Naive thymus-derived CD4-positive, alpha-beta T cell (primary cell): ENCODE measurements at regions of chr2 and their contacts with region 1.

Region 1: GRCh38 chr2:11778923-11779757 is 32.7 kb downstream of the LPIN1 start:
- DNase-seq: peak; percentile 66 to 88 (median 83)
- ATAC-seq: peak; percentile 98
- H3K4me3 ChIP-seq: peak overlapping the region; percentile 32
- H3K4me3 Mint-ChIP-seq: peak overlapping the region; percentile 53 to 80 (median 71)
- H3K27ac ChIP-seq: no peak overlapping the region
- H3K27ac Mint-ChIP-seq: peak overlapping the region; percentile 0 to 88 (median 73)
- H3K4me1 ChIP-seq: peaks cover 13 to 15% of the 10 kb centered on the region in 2 donors
- H3K4me1 Mint-ChIP-seq: peaks cover 23 to 51% (median 41%) of the 10 kb centered on the region in 7 donors
- H3K27me3 ChIP-seq: no peaks in the 10 kb centered on the region
- H3K27me3 Mint-ChIP-seq: no peaks in the 10 kb centered on the region

Region 2: GRCh38 chr2:11477994-11478393 is 301.1 kb before region 1 on chr2:
- CTCF ChIA-PET with region 1: interaction called, 4 read pairs
- POLR2A ChIA-PET with region 1: no interaction called
- intact Hi-C with region 1: loop called (anchors 1 to 5 kb)
- DNase-seq: peak; percentile 44 to 79 (median 63)
- ATAC-seq: peak; percentile 77
- H3K4me3 ChIP-seq: no peak overlapping the region
- H3K4me3 Mint-ChIP-seq: no peak overlapping the region
- H3K27ac ChIP-seq: no peak overlapping the region
- H3K27ac Mint-ChIP-seq: no peak overlapping the region
- H3K4me1 ChIP-seq: no peaks in the 10 kb centered on the region
- H3K4me1 Mint-ChIP-seq: peaks cover 0 to 8% (median 6%) of the 10 kb centered on the region in 7 donors
- H3K27me3 ChIP-seq: no peaks in the 10 kb centered on the region
- H3K27me3 Mint-ChIP-seq: peaks cover 28 to 39% (median 32%) of the 10 kb centered on the region in 5 donors

Region 3: GRCh38 chr2:11589316-11589940 is 189.7 kb before region 1 on chr2:
- CTCF ChIA-PET with region 1: no interaction called
- POLR2A ChIA-PET with region 1: no interaction called
- intact Hi-C with region 1: loop called (anchors 2 to 10 kb)
- DNase-seq: no peak
- ATAC-seq: no peak
- H3K4me3 ChIP-seq: no peak overlapping the region
- H3K4me3 Mint-ChIP-seq: no peak overlapping the region
- H3K27ac ChIP-seq: no peak overlapping the region
- H3K27ac Mint-ChIP-seq: no peak overlapping the region
- H3K4me1 ChIP-seq: no peaks in the 10 kb centered on the region
- H3K4me1 Mint-ChIP-seq: peaks cover 0 to under 1% (median 0%) of the 10 kb centered on the region in 7 donors
- H3K27me3 ChIP-seq: peaks cover 0 to 3% of the 10 kb centered on the region in 2 donors
- H3K27me3 Mint-ChIP-seq: peaks cover 0 to 4% (median 0%) of the 10 kb centered on the region in 5 donors

Region 4: GRCh38 chr2:11738589-11739436 is 40.3 kb before region 1 on chr2:
- CTCF ChIA-PET with region 1: interaction called, 14 read pairs
- POLR2A ChIA-PET with region 1: interaction called, 4 read pairs
- intact Hi-C with region 1: loop called (anchors 1 kb)
- DNase-seq: no peak
- ATAC-seq: peak; percentile 78
- H3K4me3 ChIP-seq: no peak overlapping the region
- H3K4me3 Mint-ChIP-seq: no peak overlapping the region
- H3K27ac ChIP-seq: no peak overlapping the region
- H3K27ac Mint-ChIP-seq: peak overlapping the region in 1 of 9 donors; percentile 21
- H3K4me1 ChIP-seq: peaks cover 2 to 6% of the 10 kb centered on the region in 2 donors
- H3K4me1 Mint-ChIP-seq: peaks cover 1 to 16% (median 7%) of the 10 kb centered on the region in 7 donors
- H3K27me3 ChIP-seq: no peaks in the 10 kb centered on the region
- H3K27me3 Mint-ChIP-seq: peaks cover 4 to 30% (median 7%) of the 10 kb centered on the region in 5 donors

Region 5: GRCh38 chr2:11753886-11754699 is 25.0 kb before region 1 on chr2:
- CTCF ChIA-PET with region 1: interaction called, 16 read pairs
- POLR2A ChIA-PET with region 1: interaction called, 9 read pairs
- intact Hi-C with region 1: loop called (anchors 1 kb)
- DNase-seq: peak in 7 of 9 donors; percentile 27 to 69 (median 36)
- ATAC-seq: peak; percentile 62
- H3K4me3 ChIP-seq: peak overlapping the region; percentile 37
- H3K4me3 Mint-ChIP-seq: peak overlapping the region; percentile 79 to 93 (median 82)
- H3K27ac ChIP-seq: peak overlapping the region; percentile 66
- H3K27ac Mint-ChIP-seq: peak overlapping the region; percentile 84 to 97 (median 94)
- H3K4me1 ChIP-seq: peaks cover 56 to 64% of the 10 kb centered on the region in 2 donors
- H3K4me1 Mint-ChIP-seq: peaks cover 58 to 93% (median 84%) of the 10 kb centered on the region in 7 donors
- H3K27me3 ChIP-seq: no peaks in the 10 kb centered on the region
- H3K27me3 Mint-ChIP-seq: no peaks in the 10 kb centered on the region

Region 6: DNA sequence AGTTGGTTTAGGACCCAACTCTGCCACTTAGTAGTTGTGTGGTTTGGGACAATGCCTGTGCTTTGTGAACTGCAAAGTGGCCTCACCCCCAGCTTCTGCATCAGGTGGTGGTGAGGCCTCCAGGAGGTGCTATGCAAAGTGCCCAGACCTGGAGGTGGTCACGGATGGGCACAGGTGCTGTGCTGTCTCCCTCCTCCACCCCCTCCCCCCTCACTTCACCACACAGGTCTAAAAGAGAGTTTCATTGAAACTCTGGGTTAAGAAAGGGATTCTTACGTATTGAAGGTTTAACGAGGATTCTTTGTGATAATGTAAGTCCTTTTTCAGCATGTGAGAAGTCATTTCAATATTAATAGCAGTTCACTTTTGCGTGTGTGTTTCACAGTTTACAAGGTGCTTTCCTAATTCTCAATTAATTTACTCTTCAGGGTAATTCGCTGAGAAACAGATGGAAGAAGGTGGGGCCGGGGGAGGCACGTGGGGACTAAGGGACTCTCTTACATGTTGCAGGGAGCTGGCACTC is 337.1 kb after region 1 on chr2:
- CTCF ChIA-PET with region 1: no interaction called
- POLR2A ChIA-PET with region 1: no interaction called
- intact Hi-C with region 1: no loop called
- DNase-seq: no peak
- ATAC-seq: no peak
- H3K4me3 ChIP-seq: no peak overlapping the region
- H3K4me3 Mint-ChIP-seq: no peak overlapping the region
- H3K27ac ChIP-seq: no peak overlapping the region
- H3K27ac Mint-ChIP-seq: no peak overlapping the region
- H3K4me1 ChIP-seq: peaks cover 0 to 2% of the 10 kb centered on the region in 2 donors
- H3K4me1 Mint-ChIP-seq: peaks cover under 1 to 34% (median 27%) of the 10 kb centered on the region in 7 donors
- H3K27me3 ChIP-seq: no peaks in the 10 kb centered on the region
- H3K27me3 Mint-ChIP-seq: peaks cover 0 to 5% (median 0%) of the 10 kb centered on the region in 5 donors